IMR-90 (cell line): ENCODE measurements at regions of chr13 and their contacts with region 1.

Region 1: GRCh38 chr13:79775830-79776229 is 294.9 kb downstream of the NDFIP2 start:
- DNase-seq: peak; percentile 87
- ATAC-seq: peak; percentile 83
- H3K4me3 ChIP-seq: no peak overlapping the region
- H3K27ac ChIP-seq: no peak overlapping the region
- H3K4me1 ChIP-seq: peaks cover 7% of the 10 kb centered on the region
- H3K27me3 ChIP-seq: no peaks in the 10 kb centered on the region
- CTCF ChIP-seq: peak; percentile 81
- POLR2A ChIP-seq: no peak
- RAD21 ChIP-seq: peak; percentile 93

Region 2: DNA sequence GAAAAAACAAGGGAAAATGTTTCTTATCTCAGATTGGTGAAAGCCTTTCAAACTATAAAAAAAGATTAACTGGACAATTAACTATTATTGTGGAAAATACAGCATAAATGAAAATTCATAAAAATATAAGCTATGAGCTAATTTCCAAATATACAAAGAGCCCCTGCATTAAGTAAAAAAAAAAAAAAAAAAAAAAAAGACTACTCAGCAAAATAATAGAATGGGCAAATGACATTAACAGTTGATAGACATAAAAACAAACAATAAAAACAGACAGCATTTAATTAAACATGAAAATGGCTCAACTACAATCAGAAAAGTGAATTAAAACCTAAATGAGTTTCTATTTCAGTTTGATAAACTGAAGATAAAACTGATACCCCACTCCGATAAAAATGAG is 447.3 kb before region 1 on chr13:
- CTCF ChIA-PET with region 1: no interaction called
- POLR2A ChIA-PET with region 1: no interaction called
- dilution Hi-C with region 1: no loop called
- in situ Hi-C with region 1: no loop called
- intact Hi-C with region 1: no loop called
- DNase-seq: no peak
- ATAC-seq: no peak
- H3K4me3 ChIP-seq: no peak overlapping the region
- H3K27ac ChIP-seq: no peak overlapping the region
- H3K4me1 ChIP-seq: no peaks in the 10 kb centered on the region
- H3K27me3 ChIP-seq: no peaks in the 10 kb centered on the region
- CTCF ChIP-seq: no peak
- POLR2A ChIP-seq: no peak
- RAD21 ChIP-seq: no peak

Region 3: GRCh38 chr13:79581870-79582315 is 193.9 kb before region 1 on chr13:
- CTCF ChIA-PET with region 1: no interaction called
- POLR2A ChIA-PET with region 1: no interaction called
- dilution Hi-C with region 1: no loop called
- in situ Hi-C with region 1: no loop called
- intact Hi-C with region 1: no loop called
- DNase-seq: peak; percentile 3
- ATAC-seq: peak; percentile 29
- H3K4me3 ChIP-seq: no peak overlapping the region
- H3K27ac ChIP-seq: no peak overlapping the region
- H3K4me1 ChIP-seq: no peaks in the 10 kb centered on the region
- H3K27me3 ChIP-seq: no peaks in the 10 kb centered on the region
- CTCF ChIP-seq: no peak
- POLR2A ChIP-seq: no peak
- RAD21 ChIP-seq: no peak

Region 4: GRCh38 chr13:79679334-79679733 is 96.5 kb before region 1 on chr13:
- CTCF ChIA-PET with region 1: interaction called, 6 read pairs
- POLR2A ChIA-PET with region 1: no interaction called
- dilution Hi-C with region 1: no loop called
- in situ Hi-C with region 1: no loop called
- intact Hi-C with region 1: loop called (anchors 5 kb)
- DNase-seq: peak; percentile 70
- ATAC-seq: peak; percentile 77
- H3K4me3 ChIP-seq: no peak overlapping the region
- H3K27ac ChIP-seq: no peak overlapping the region
- H3K4me1 ChIP-seq: no peaks in the 10 kb centered on the region; the same call in 1 of the 2 replicates
- H3K27me3 ChIP-seq: no peaks in the 10 kb centered on the region
- CTCF ChIP-seq: peak; percentile 74
- POLR2A ChIP-seq: no peak
- RAD21 ChIP-seq: peak; percentile 85

Region 5: GRCh38 chr13:80048802-80049201 is 273.0 kb after region 1 on chr13:
- CTCF ChIA-PET with region 1: interaction called, 3 read pairs
- POLR2A ChIA-PET with region 1: no interaction called
- dilution Hi-C with region 1: no loop called
- in situ Hi-C with region 1: loop called (anchors 25 kb)
- intact Hi-C with region 1: no loop called
- DNase-seq: peak; percentile 98
- ATAC-seq: peak; percentile 99
- H3K4me3 ChIP-seq: no peak overlapping the region
- H3K27ac ChIP-seq: no peak overlapping the region
- H3K4me1 ChIP-seq: peaks cover 7% of the 10 kb centered on the region
- H3K27me3 ChIP-seq: no peaks in the 10 kb centered on the region
- CTCF ChIP-seq: no peak
- POLR2A ChIP-seq: no peak
- RAD21 ChIP-seq: peak; percentile 39

Region 6: DNA sequence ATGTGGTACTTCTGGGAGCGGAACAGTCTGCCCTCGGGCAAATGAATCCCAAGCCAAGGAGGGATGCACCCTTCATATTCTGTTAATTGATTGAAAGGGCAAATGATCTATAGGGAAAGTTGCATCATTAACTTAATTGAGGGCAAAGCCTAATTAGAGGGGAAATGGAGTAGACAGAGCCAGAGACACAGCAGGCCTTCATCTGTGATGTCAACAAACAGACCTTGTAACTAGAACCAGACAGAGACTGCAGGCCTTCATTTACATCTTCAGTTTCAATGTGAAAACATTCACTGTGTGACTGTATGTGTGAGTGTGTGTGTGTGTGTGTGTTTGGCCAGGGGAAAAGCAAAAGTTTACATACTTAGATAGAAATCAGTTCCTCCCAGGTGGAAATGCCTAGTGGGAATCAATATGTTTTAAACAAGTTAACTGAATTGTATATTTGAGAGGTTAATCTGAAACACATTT is 438.7 kb after region 1 on chr13:
- CTCF ChIA-PET with region 1: no interaction called
- POLR2A ChIA-PET with region 1: no interaction called
- dilution Hi-C with region 1: no loop called
- in situ Hi-C with region 1: no loop called
- intact Hi-C with region 1: loop called (anchors 5 kb)
- DNase-seq: peak; percentile 59
- ATAC-seq: no peak
- H3K4me3 ChIP-seq: no peak overlapping the region
- H3K27ac ChIP-seq: no peak overlapping the region
- H3K4me1 ChIP-seq: peaks cover 9% of the 10 kb centered on the region
- H3K27me3 ChIP-seq: no peaks in the 10 kb centered on the region
- CTCF ChIP-seq: no peak
- POLR2A ChIP-seq: no peak
- RAD21 ChIP-seq: no peak

Region 7: DNA sequence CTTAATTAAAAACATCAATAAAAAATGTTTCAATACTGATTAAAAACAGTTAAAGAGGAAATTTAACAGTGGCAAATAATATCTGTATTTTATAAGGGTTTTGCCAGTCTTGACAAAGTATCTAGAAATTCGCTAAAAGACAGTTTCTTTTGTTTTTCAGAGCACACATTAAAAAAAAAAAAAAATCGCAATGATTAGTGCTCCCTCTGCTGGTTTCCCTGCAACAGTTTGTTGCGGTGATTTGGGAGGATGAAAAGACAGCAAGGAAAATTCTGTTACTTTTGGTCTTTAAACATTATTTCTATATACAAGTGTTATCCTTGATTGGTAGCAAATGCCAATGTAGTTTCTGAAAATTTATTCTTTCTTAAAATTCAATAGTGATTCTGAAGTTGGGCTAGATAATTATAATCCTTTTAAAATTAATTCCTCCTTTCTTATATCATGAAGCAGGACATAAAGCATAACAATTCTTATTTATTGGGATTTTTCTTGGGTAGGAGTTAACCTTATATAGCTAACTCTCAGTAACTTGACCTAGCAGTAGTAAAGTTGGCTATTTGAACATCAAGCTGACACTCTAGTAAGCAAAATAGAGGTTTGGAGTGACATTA is 588.2 kb after region 1 on chr13:
- CTCF ChIA-PET with region 1: no interaction called
- POLR2A ChIA-PET with region 1: no interaction called
- dilution Hi-C with region 1: no loop called
- in situ Hi-C with region 1: loop called (anchors 10 kb)
- intact Hi-C with region 1: loop called (anchors 1 kb)
- DNase-seq: peak; percentile 49
- ATAC-seq: peak; percentile 27; the same call in 1 of the 2 replicates
- H3K4me3 ChIP-seq: no peak overlapping the region
- H3K27ac ChIP-seq: no peak overlapping the region
- H3K4me1 ChIP-seq: no peaks in the 10 kb centered on the region
- H3K27me3 ChIP-seq: no peaks in the 10 kb centered on the region
- CTCF ChIP-seq: peak; percentile 88
- POLR2A ChIP-seq: no peak
- RAD21 ChIP-seq: peak; percentile 74